BJ (cell line): ENCODE measurements at regions of chr7 and their contacts with region 1.

Region 1: DNA sequence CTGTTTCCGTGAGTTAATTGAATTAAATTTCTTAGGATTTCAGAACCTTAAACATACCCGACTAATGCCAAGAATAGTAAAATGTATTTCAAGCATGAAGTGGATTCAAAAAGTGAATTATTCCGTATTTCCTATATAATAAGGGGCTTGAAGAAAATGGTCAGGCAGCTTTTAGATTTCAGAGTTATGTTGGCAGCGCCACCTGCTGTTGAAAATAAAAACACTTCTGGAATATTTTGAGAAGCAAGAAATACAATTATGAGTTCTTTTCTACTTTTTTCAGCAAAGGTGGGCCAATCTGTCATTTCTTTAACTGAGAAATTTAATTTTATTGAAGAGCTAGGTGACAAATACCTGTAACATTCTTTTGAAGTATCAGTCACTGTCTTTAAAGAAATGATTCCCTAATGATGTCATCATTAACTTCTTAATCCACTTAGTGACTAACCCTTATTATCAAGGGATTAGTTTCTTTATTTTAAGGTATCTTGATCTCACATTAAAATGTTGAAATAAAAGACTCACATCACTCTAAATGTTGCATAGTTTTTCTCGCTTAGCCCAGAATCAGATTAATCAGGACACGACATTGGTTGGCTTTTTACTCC is 36.6 kb upstream of the AGR3 start:
- DNase-seq: no peak
- H3K4me3 ChIP-seq: no peak overlapping the region
- H3K27me3 ChIP-seq: no peaks in the 10 kb centered on the region
- CTCF ChIP-seq: peak; percentile 57

Region 2: GRCh38 chr7:16695621-16696237 is 222.7 kb before region 1 on chr7:
- CTCF ChIA-PET with region 1: interaction called, 20 read pairs
- POLR2A ChIA-PET with region 1: no interaction called
- DNase-seq: no peak
- H3K4me3 ChIP-seq: no peak overlapping the region
- H3K27me3 ChIP-seq: no peaks in the 10 kb centered on the region
- CTCF ChIP-seq: peak; percentile 52

Region 3: GRCh38 chr7:16801111-16801542 is 117.3 kb before region 1 on chr7:
- CTCF ChIA-PET with region 1: interaction called, 20 read pairs
- POLR2A ChIA-PET with region 1: no interaction called
- DNase-seq: peak; percentile 17
- H3K4me3 ChIP-seq: no peak overlapping the region
- H3K27me3 ChIP-seq: no peaks in the 10 kb centered on the region
- CTCF ChIP-seq: peak; percentile 65

Region 4: DNA sequence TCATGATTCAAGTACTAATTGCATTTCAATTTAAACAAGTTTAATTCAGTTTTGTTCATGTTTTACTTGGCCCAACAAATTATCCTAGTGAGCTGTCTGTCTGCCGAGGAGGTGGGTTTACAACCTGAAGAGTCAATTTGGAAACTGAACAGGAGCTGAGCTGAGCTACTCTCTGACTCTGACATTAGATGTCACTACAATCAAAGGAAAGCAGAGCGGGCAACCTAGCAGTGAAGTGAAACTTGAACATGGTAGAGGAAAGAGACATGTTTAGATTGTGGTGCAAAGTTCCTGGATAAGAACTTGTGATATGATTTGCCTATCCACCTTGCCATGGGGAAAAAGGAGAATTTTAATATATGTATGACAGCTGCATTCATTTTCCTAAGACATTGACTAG is 27.1 kb before region 1 on chr7:
- CTCF ChIA-PET with region 1: interaction called, 44 read pairs
- POLR2A ChIA-PET with region 1: interaction called, 3 read pairs
- DNase-seq: no peak
- H3K4me3 ChIP-seq: no peak overlapping the region
- H3K27me3 ChIP-seq: no peaks in the 10 kb centered on the region
- CTCF ChIP-seq: peak; percentile 65

Region 5: DNA sequence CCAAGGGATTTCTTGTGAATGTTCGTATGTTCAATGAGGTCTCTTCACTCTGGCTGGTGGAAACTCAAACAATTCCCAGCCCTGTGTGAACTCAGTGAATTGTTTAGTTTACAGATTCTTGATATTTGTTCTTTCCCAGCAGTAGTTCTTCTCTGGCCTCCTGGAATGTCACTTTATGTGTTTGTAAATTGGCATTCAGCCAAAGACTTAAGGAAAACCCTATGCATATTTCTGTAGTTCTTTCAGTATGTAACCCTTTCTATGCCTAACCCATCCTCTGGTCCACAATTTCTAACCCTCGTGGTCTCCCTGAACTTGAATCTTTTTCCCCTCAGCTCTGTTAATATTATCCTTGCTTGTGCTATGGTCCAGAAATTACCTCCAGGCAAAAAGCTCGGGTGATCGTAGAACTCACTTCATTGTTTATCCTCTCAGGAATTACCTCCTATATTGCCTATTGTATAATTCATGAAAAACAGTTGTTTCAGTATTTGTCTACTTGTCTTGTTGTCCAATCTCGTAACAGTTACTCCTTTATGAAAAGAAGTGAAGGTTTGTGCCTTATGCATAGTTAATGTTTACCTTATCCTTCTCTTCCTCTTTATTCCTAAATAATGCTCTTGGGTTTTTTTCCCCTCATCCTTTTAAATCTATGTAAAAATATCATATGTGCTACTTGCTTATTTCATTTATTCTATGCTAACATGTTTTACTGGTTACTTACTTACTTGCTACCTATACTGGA is 12.9 kb before region 1 on chr7:
- CTCF ChIA-PET with region 1: interaction called, 12 read pairs
- POLR2A ChIA-PET with region 1: no interaction called
- DNase-seq: no peak
- H3K4me3 ChIP-seq: no peak overlapping the region
- H3K27me3 ChIP-seq: no peaks in the 10 kb centered on the region
- CTCF ChIP-seq: no peak